ENCODE measurements at regions of chr19 and their contacts with region 1.

Region 1: DNA sequence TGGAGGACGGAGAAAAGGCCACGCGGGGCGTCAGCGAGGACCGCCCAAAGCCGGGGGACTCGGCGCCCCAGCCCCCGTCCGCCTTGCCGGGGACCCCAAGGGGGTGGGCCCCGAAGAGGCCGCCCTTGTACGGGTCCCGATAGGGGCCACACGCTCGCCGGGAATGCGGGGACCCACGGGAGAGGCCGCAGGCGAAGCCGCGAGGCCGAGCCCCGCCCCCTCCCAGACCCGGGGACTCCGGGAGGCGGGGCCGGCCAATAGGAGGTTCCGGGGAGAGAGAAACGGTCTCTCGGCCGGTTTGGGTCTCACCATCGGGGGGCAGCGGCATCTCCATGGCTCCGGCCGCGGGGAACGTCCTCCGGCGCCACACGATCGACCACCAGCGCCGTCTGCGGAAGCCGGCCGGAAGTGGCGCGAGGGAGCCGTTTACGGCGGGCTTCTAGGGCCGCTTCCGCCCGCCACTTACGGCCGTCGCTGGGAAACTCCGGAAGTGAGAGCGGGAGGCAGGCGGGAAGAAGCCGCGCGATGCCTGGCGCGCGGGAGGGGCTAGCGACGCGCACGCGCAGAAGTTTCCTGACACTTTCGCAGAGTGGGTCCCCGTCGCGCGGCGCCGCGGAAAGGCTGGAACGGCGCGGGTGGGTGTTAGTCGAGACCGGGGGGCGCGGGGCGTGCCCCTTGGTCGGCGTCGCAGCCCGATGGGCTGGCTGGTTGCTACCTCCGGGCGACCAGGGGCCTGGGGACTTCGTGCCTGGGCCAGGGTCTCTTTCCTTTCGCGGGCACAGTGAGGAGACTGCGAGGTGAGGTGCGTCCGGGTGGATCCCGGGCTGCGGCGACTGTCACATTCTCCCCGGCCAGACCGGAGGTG is at the start of gene CHERP:
- DNase-seq: peak; percentile 93 to 95 (median 94)
- H3K4me3 ChIP-seq: peak within 1 kb of the TSS; percentile 91 to 96
- H3K4me3 Mint-ChIP-seq: peak within 1 kb of the TSS; percentile 89 to 97 (median 92)
- H3K27ac ChIP-seq: peak within 1 kb of the TSS; percentile 77
- H3K27ac Mint-ChIP-seq: peak within 1 kb of the TSS; percentile 90 to 96 (median 94)
- H3K4me1 ChIP-seq: peaks cover 63% of the 10 kb centered on the region
- H3K4me1 Mint-ChIP-seq: peaks cover 34 to 68% (median 51%) of the 10 kb centered on the region in 4 donors
- H3K27me3 ChIP-seq: no peaks in the 10 kb centered on the region
- H3K27me3 Mint-ChIP-seq: no peaks in the 10 kb centered on the region
- total RNA-seq, gene CHERP: 72.9 to 73.5 TPM

Region 2: GRCh38 chr19:16457195-16457953 is 84.9 kb before region 1 on chr19:
- CTCF ChIA-PET with region 1: no interaction called
- POLR2A ChIA-PET with region 1: no interaction called
- intact Hi-C with region 1: no loop called
- DNase-seq: no peak
- H3K4me3 ChIP-seq: no peak overlapping the region
- H3K4me3 Mint-ChIP-seq: peak overlapping the region in 6 of 8 donors; percentile 28 to 63 (median 53)
- H3K27ac ChIP-seq: no peak overlapping the region
- H3K27ac Mint-ChIP-seq: peak overlapping the region in 4 of 7 donors; percentile 29 to 85 (median 60)
- H3K4me1 ChIP-seq: peaks cover 19% of the 10 kb centered on the region
- H3K4me1 Mint-ChIP-seq: peaks cover 33 to 68% (median 50%) of the 10 kb centered on the region in 4 donors
- H3K27me3 ChIP-seq: no peaks in the 10 kb centered on the region
- H3K27me3 Mint-ChIP-seq: no peaks in the 10 kb centered on the region

Region 3: DNA sequence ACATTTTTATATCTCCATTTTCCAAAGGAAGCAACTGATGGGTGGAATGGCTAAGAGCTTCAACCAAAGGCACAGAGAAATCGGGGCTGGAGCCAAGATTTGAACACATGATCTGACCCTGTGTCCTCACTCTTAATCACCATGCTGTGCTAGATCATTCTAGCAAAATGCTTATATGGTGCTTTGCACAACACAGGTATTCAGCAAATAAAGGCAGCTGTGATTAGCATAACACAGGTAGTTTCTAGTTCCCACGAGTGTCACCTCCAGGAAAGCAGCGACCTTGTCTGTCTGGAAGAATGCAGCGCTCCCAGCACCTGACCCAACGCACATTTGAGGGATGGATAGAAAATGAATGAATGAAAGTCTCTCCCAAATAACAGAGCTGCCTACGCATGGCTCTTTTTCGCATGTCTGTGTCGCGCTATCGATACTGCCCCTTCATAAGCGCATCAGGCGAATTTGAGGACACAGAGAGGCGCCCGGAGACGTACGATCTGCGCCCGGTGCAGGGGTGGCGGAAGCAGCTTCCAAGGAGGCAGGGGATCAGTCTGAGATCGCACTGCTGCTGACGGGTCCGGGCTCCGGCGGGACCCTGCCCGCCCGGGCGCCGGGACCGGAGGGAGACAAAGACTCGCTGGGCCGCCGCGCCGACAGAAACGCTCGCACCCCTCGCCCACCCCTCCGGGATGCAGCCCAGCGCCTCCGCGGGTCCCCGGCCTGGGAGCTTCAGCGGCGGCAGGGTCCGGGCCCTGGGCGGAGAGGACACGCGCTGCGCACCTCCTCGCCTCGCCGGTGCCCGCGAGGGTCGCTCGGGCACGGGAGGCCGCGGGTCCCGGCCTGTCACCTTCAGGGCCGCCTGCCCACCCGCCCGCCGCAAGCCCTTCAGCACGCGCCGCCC is 71.1 kb before region 1 on chr19:
- CTCF ChIA-PET with region 1: no interaction called
- POLR2A ChIA-PET with region 1: no interaction called
- intact Hi-C with region 1: loop called (anchors 5 kb)
- DNase-seq: peak in 3 of 5 donors; percentile 13 to 15 (median 13)
- H3K4me3 ChIP-seq: peak overlapping the region; percentile 42 to 61
- H3K4me3 Mint-ChIP-seq: peak overlapping the region; percentile 87 to 92 (median 90)
- H3K27ac ChIP-seq: peak overlapping the region; percentile 79
- H3K27ac Mint-ChIP-seq: peak overlapping the region; percentile 26 to 91 (median 84)
- H3K4me1 ChIP-seq: peaks cover 33% of the 10 kb centered on the region
- H3K4me1 Mint-ChIP-seq: peaks cover 28 to 49% (median 36%) of the 10 kb centered on the region in 4 donors
- H3K27me3 ChIP-seq: no peaks in the 10 kb centered on the region
- H3K27me3 Mint-ChIP-seq: peaks cover 0 to 2% of the 10 kb centered on the region in 2 donors

Region 4: GRCh38 chr19:16495982-16496612 is 46.2 kb before region 1 on chr19 and contains the starts of genes C19orf44 and CALR3:
- CTCF ChIA-PET with region 1: interaction called, 3 read pairs
- POLR2A ChIA-PET with region 1: interaction called, 12 read pairs
- intact Hi-C with region 1: loop called (anchors 1 kb)
- DNase-seq: peak; percentile 96 to 97 (median 96)
- H3K4me3 ChIP-seq: peak within 1 kb of the TSS; percentile 65 to 75
- H3K4me3 Mint-ChIP-seq: peak within 1 kb of the TSS; percentile 89 to 95 (median 92)
- H3K27ac ChIP-seq: peak within 1 kb of the TSS; percentile 50
- H3K27ac Mint-ChIP-seq: peak within 1 kb of the TSS; percentile 79 to 97 (median 93)
- H3K4me1 ChIP-seq: peaks cover 10% of the 10 kb centered on the region
- H3K4me1 Mint-ChIP-seq: peaks cover 5 to 14% (median 9%) of the 10 kb centered on the region in 4 donors
- H3K27me3 ChIP-seq: no peaks in the 10 kb centered on the region
- H3K27me3 Mint-ChIP-seq: no peaks in the 10 kb centered on the region
- total RNA-seq, gene C19orf44: 4.6 to 6.7 TPM
- total RNA-seq, gene CALR3: not detected

Region 5: DNA sequence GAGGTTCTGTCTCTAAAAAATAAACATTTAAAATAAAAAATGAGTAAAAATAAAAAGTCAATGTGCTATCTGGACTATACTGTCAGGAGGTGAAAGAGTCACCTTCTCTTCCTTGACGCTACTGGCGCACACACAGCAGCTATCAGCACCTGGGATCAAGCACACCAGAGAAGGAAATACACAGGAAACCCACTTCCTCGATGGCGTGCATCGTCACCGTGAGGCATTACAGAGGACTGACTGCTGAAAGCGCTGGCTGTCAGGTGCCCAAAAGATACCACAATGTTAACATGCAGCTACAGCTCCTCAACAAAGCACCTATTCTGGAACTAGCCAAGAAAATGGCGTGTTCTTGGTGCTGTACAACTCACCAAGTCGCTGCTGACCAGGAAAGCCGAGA is 23.9 kb after region 1 on chr19:
- CTCF ChIA-PET with region 1: no interaction called
- POLR2A ChIA-PET with region 1: interaction called, 10 read pairs
- intact Hi-C with region 1: loop called (anchors 1 kb)
- DNase-seq: peak; percentile 89 to 96 (median 93)
- H3K4me3 ChIP-seq: peak overlapping the region; percentile 22 to 31
- H3K4me3 Mint-ChIP-seq: peak overlapping the region; percentile 83 to 98 (median 86)
- H3K27ac ChIP-seq: peak overlapping the region; percentile 71
- H3K27ac Mint-ChIP-seq: peak overlapping the region; percentile 87 to 100 (median 100)
- H3K4me1 ChIP-seq: peaks cover 47% of the 10 kb centered on the region
- H3K4me1 Mint-ChIP-seq: peaks cover 23 to 61% (median 44%) of the 10 kb centered on the region in 4 donors
- H3K27me3 ChIP-seq: no peaks in the 10 kb centered on the region
- H3K27me3 Mint-ChIP-seq: no peaks in the 10 kb centered on the region

Region 6: DNA sequence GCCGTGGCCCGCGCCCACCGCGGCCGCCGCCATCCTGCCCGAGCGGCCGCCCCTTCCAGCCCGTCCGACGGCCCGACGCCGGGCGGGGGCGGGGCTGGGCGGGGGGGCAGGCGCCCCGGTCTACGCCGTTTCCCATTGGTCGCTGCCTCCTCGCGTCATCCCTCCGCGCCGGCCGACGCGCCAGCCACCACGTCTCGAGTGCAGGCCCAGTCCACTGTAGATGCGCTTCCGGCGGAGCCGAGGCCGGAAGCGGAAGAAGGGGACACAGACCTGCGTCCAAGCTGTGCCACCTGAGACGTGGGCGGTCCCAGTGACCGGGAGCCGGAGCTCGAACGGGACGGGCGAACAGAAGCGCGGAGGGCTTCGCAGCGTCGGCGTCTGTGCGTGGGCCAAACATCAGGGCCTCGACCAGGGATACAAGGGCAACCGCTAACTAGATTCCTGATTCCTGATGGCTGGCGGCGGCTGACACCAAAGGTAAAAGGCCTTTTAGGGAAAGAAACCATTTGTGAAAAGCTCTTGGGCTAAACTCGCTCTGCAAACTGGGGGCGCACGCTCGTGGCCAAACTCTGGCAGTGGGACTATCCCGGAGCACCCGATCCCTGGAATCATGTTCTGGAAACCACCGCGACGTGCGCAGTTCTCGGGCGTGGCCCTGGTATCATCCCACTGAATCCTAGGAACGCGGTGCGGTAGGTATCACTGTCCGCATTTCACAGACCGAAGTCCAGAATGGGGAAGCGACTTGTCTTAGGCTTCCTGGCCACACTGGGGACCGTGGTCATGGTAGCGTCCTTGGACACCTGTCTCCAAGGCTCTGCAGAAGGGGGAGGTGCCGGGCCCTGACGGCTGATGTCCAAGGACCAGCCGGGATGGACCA is 30.3 kb after region 1 on chr19 and contains the start of gene SLC35E1:
- CTCF ChIA-PET with region 1: no interaction called
- POLR2A ChIA-PET with region 1: interaction called, 10 read pairs
- intact Hi-C with region 1: loop called (anchors 1 kb)
- DNase-seq: peak; percentile 89 to 91 (median 91)
- H3K4me3 ChIP-seq: peak within 1 kb of the TSS; percentile 95 to 98
- H3K4me3 Mint-ChIP-seq: peak within 1 kb of the TSS; percentile 96 to 100 (median 99)
- H3K27ac ChIP-seq: peak within 1 kb of the TSS; percentile 91
- H3K27ac Mint-ChIP-seq: peak within 1 kb of the TSS; percentile 98 to 100 (median 99)
- H3K4me1 ChIP-seq: peaks cover 54% of the 10 kb centered on the region
- H3K4me1 Mint-ChIP-seq: peaks cover 33 to 76% (median 57%) of the 10 kb centered on the region in 4 donors
- H3K27me3 ChIP-seq: no peaks in the 10 kb centered on the region
- H3K27me3 Mint-ChIP-seq: no peaks in the 10 kb centered on the region
- total RNA-seq, gene SLC35E1: 38.8 TPM

Region 7: DNA sequence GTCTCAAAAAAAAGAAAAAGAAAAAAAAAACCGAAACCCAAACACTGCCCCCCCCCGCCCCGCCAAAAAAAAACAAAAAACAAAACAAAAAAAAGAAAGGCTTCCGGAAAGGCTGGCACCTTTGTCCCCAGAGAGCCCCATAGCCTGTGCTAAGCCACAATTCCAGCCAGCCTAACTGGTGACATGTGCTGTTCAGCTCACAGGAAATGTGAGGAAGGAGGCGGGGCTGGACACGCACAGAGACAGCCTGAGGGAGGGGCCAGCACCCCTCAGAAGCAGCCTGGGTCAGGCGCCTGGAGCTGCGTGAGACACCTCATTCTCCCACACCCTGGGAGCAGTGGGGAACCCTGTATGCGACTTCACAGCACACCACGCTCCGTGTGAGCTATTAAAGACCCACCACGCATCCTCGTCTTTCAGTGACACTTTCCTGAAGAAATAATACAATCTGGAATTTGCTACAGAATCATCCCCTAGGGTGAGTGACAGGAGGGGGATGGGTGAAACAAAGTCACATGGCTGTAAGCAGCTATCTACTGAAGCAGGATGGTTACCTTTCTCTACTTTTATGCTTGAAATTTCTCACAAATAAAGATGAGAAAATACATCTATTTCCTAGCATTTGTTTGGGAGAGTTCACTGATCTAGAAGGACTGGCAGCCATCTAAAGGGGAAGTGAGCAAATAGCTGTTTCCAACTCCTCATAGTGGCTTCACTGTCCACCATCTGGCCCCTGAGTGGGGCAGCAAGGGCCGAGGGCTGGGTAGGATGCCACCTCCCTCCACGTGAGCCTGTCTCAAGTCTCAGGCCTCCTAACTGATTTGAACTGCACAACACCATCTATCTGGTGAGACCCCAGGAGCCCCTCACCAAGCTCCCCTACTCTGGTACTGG is 42.2 kb after region 1 on chr19:
- CTCF ChIA-PET with region 1: interaction called, 3 read pairs
- POLR2A ChIA-PET with region 1: interaction called, 6 read pairs
- intact Hi-C with region 1: loop called (anchors 1 kb)
- DNase-seq: peak; percentile 89 to 99 (median 91)
- H3K4me3 ChIP-seq: peak overlapping the region; percentile 45 to 52
- H3K4me3 Mint-ChIP-seq: peak overlapping the region; percentile 70 to 90 (median 80)
- H3K27ac ChIP-seq: peak overlapping the region; percentile 58
- H3K27ac Mint-ChIP-seq: peak overlapping the region; percentile 96 to 99 (median 97)
- H3K4me1 ChIP-seq: peaks cover 86% of the 10 kb centered on the region
- H3K4me1 Mint-ChIP-seq: peaks cover 53 to 93% (median 74%) of the 10 kb centered on the region in 4 donors
- H3K27me3 ChIP-seq: no peaks in the 10 kb centered on the region
- H3K27me3 Mint-ChIP-seq: no peaks in the 10 kb centered on the region

Region 8: GRCh38 chr19:16659831-16660708 is 117.8 kb after region 1 on chr19 and contains the start of gene SMIM7:
- CTCF ChIA-PET with region 1: no interaction called
- POLR2A ChIA-PET with region 1: interaction called, 20 read pairs
- intact Hi-C with region 1: loop called (anchors 1 kb)
- DNase-seq: peak; percentile 99
- H3K4me3 ChIP-seq: peak within 1 kb of the TSS; percentile 96
- H3K4me3 Mint-ChIP-seq: peak within 1 kb of the TSS; percentile 96 to 99 (median 98)
- H3K27ac ChIP-seq: peak within 1 kb of the TSS; percentile 82
- H3K27ac Mint-ChIP-seq: peak within 1 kb of the TSS; percentile 96 to 99 (median 99)
- H3K4me1 ChIP-seq: peaks cover 37% of the 10 kb centered on the region
- H3K4me1 Mint-ChIP-seq: peaks cover 21 to 58% (median 44%) of the 10 kb centered on the region in 4 donors
- H3K27me3 ChIP-seq: no peaks in the 10 kb centered on the region
- H3K27me3 Mint-ChIP-seq: no peaks in the 10 kb centered on the region
- total RNA-seq, gene SMIM7: 89.3 to 94.1 TPM

Measured in CD4-positive, alpha-beta memory T cell (primary cell).